ENCODE measurements at regions of chr12 and their contacts with region 1.

Region 1: DNA sequence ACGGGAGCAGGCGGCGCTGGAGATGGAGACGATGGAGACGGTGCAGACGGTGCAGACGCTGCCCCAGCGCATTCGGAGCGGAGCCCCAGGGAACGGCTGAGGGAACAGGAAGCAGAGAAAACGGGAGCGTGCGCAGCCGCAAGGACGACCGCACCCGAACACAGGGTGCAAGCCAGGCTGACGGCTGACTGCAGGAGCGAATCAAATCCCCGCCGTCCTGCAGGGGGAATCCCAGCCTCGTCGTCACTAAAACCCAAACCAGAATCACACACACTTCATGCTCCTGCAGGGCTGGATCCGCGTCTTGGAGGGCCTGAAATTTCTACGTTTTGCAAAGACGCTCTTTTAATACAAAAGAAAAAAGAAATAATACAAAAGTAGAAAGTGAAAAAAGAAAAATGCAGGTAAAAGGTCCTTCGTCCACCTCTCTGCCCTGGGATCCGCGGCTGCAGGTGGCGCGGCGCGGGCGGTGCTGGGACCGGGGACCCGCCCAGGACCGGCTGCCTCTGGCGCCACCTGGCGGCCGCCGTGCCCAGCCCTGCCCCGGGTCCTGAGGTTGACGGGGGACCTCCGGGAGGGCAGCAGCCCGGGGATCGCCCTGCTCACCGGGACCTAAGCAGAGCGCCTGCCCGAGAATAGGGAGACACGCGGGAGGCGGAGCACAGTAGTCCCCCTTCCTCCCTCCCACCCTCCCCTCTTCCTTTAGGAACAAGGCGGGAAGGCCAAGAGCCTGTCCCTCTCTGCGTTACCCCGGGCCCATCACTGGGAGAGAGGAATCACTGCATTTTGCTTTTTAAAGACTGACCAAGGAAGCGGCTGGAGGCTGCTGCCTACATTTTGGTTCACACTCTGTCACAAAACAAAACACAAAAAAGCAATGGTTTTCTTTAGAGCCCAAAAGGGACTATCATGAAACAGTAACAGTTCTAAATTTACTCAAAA is 20.1 kb downstream of the STX2 start:
- DNase-seq: peak; percentile 59 to 91 (median 74)
- ATAC-seq: peak; percentile 94
- H3K4me3 ChIP-seq: peak overlapping the region; percentile 64 to 66
- H3K4me3 Mint-ChIP-seq: peak overlapping the region; percentile 88
- H3K27ac ChIP-seq: peak overlapping the region; percentile 24 to 56
- H3K27ac Mint-ChIP-seq: peak overlapping the region; percentile 41
- H3K4me1 ChIP-seq: peaks cover 7% of the 10 kb centered on the region
- H3K4me1 Mint-ChIP-seq: peaks cover 10% of the 10 kb centered on the region
- H3K27me3 ChIP-seq: no peaks in the 10 kb centered on the region
- H3K27me3 Mint-ChIP-seq: no peaks in the 10 kb centered on the region
- CTCF ChIP-seq: peak; percentile 97

Region 2: GRCh38 chr12:130049666-130050065 is 769.2 kb before region 1 on chr12:
- CTCF ChIA-PET with region 1: no interaction called
- POLR2A ChIA-PET with region 1: no interaction called
- intact Hi-C with region 1: loop called in 1 of 2 experiments (anchors 2 kb)
- DNase-seq: no peak
- ATAC-seq: no peak
- H3K4me3 ChIP-seq: no peak overlapping the region
- H3K4me3 Mint-ChIP-seq: no peak overlapping the region
- H3K27ac ChIP-seq: no peak overlapping the region
- H3K27ac Mint-ChIP-seq: no peak overlapping the region
- H3K4me1 ChIP-seq: peaks cover 4% of the 10 kb centered on the region
- H3K4me1 Mint-ChIP-seq: peaks cover 2% of the 10 kb centered on the region
- H3K27me3 ChIP-seq: peaks cover 0 to 11% of the 10 kb centered on the region in 2 experiments
- H3K27me3 Mint-ChIP-seq: peaks cover 34% of the 10 kb centered on the region
- CTCF ChIP-seq: no peak

Region 3: DNA sequence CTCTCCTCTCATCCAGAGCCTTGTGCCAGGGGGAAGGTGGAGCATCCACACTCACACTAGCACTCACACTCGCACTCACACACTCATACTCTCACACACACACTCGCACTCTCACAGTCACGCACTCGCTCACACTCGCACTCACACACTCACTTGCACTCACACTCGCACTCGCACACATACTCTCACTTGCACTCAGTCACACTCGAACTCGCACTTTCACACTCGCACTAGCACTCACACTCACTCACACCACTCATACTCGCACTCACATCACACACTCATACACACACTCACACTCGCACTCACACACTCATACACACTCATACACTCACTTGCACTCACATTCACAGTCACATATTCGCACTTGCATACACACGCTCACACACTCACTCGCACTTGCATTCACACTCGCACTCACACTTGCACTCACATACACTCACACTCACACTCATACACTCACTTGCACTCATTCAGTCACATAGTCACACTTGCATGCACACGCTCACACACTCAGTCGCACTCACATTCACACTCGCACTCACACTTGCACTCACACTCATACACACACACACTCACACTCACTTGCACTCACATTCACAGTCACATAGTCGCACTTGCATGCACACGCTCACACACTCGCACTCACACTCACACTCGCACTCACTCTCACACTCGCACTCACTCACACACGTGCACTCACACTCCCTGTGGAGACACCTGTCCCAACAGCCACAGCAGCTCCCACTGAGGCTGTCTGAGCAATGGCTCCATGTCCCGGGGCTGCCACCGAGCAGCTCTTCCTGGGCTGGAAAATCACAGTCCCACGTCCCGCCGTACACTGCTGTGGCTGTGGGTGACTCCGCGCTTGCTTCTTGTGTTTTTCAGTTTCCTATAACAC is 90.5 kb before region 1 on chr12:
- CTCF ChIA-PET with region 1: no interaction called
- POLR2A ChIA-PET with region 1: no interaction called
- intact Hi-C with region 1: no loop called
- DNase-seq: no peak
- ATAC-seq: no peak
- H3K4me3 ChIP-seq: no peak overlapping the region
- H3K4me3 Mint-ChIP-seq: no peak overlapping the region
- H3K27ac ChIP-seq: no peak overlapping the region
- H3K27ac Mint-ChIP-seq: no peak overlapping the region
- H3K4me1 ChIP-seq: no peaks in the 10 kb centered on the region
- H3K4me1 Mint-ChIP-seq: no peaks in the 10 kb centered on the region
- H3K27me3 ChIP-seq: no peaks in the 10 kb centered on the region
- H3K27me3 Mint-ChIP-seq: peaks cover 9% of the 10 kb centered on the region
- CTCF ChIP-seq: no peak

Region 4: GRCh38 chr12:130747867-130748740 is 70.8 kb before region 1 on chr12:
- CTCF ChIA-PET with region 1: interaction called, 6 read pairs
- POLR2A ChIA-PET with region 1: no interaction called
- intact Hi-C with region 1: loop called in 1 of 2 experiments (anchors 5 kb)
- DNase-seq: peak; percentile 38 to 79 (median 70)
- ATAC-seq: peak; percentile 73
- H3K4me3 ChIP-seq: no peak overlapping the region
- H3K4me3 Mint-ChIP-seq: peak overlapping the region; percentile 33
- H3K27ac ChIP-seq: no peak overlapping the region
- H3K27ac Mint-ChIP-seq: no peak overlapping the region
- H3K4me1 ChIP-seq: peaks cover 6% of the 10 kb centered on the region
- H3K4me1 Mint-ChIP-seq: peaks cover 6% of the 10 kb centered on the region
- H3K27me3 ChIP-seq: peaks cover 0 to 2% of the 10 kb centered on the region in 2 experiments
- H3K27me3 Mint-ChIP-seq: peaks cover 19% of the 10 kb centered on the region
- CTCF ChIP-seq: peak; percentile 83

Region 5: DNA sequence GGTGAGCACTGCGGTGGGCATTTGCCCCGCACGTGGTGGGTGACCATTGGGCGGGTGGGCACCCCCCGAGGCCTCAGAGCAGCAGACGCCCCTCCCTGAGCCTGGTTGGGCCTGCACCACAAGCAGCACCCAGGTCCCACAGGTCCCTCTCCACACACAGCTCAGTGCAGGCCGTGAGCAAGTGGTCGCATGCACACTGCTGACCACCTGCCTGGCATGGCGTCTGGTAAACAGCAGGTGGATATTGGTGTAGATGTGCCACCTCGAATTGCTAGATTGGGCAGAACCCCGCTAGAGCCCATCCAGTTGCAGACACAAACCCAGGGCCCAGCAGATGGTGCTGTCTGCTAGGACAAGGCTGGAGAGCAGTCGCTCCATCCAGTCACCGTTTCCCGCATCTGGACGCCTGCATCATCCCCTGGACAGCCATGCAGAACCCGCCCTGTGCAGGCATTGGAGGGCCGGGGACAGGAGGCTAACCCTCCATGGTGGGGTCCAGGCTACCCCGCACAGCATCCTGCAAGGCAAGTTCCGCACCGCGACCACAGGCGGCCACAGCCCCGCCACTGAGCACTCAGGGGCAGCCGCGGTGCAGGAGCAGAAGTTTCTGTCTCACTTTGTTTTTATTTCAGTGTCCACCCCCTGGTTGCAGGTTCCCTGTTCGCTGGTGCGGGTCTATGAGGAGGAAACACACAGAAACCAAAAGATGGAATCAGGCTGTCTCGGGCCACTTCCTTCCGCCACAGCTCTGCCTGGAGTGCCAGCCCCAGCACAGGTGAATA is 57.2 kb before region 1 on chr12:
- CTCF ChIA-PET with region 1: interaction called, 14 read pairs
- POLR2A ChIA-PET with region 1: no interaction called
- intact Hi-C with region 1: loop called (anchors 1 kb)
- DNase-seq: peak; percentile 26 to 74 (median 55)
- ATAC-seq: peak; percentile 48
- H3K4me3 ChIP-seq: peak overlapping the region; percentile 24 to 37
- H3K4me3 Mint-ChIP-seq: peak overlapping the region; percentile 59
- H3K27ac ChIP-seq: no peak overlapping the region
- H3K27ac Mint-ChIP-seq: no peak overlapping the region
- H3K4me1 ChIP-seq: peaks cover 23% of the 10 kb centered on the region
- H3K4me1 Mint-ChIP-seq: no peaks in the 10 kb centered on the region
- H3K27me3 ChIP-seq: no peaks in the 10 kb centered on the region
- H3K27me3 Mint-ChIP-seq: peaks cover 2% of the 10 kb centered on the region
- CTCF ChIP-seq: peak; percentile 40

Region 6: GRCh38 chr12:130775953-130776856 is 42.7 kb before region 1 on chr12:
- CTCF ChIA-PET with region 1: no interaction called
- POLR2A ChIA-PET with region 1: no interaction called
- intact Hi-C with region 1: loop called in 1 of 2 experiments (anchors 5 kb)
- DNase-seq: peak in 7 of 9 experiments; percentile 16 to 69 (median 43)
- ATAC-seq: peak; percentile 72
- H3K4me3 ChIP-seq: peak overlapping the region; percentile 41 to 62
- H3K4me3 Mint-ChIP-seq: peak overlapping the region; percentile 83
- H3K27ac ChIP-seq: no peak overlapping the region
- H3K27ac Mint-ChIP-seq: no peak overlapping the region
- H3K4me1 ChIP-seq: peaks cover 9% of the 10 kb centered on the region
- H3K4me1 Mint-ChIP-seq: peaks cover 13% of the 10 kb centered on the region
- H3K27me3 ChIP-seq: no peaks in the 10 kb centered on the region
- H3K27me3 Mint-ChIP-seq: peaks cover 23% of the 10 kb centered on the region
- CTCF ChIP-seq: no peak

Region 7: GRCh38 chr12:130803702-130804101 is 15.2 kb before region 1 on chr12:
- CTCF ChIA-PET with region 1: no interaction called
- POLR2A ChIA-PET with region 1: no interaction called
- intact Hi-C with region 1: no loop called
- DNase-seq: no peak
- ATAC-seq: no peak
- H3K4me3 ChIP-seq: no peak overlapping the region
- H3K4me3 Mint-ChIP-seq: no peak overlapping the region
- H3K27ac ChIP-seq: no peak overlapping the region
- H3K27ac Mint-ChIP-seq: peak overlapping the region; percentile 11
- H3K4me1 ChIP-seq: no peaks in the 10 kb centered on the region
- H3K4me1 Mint-ChIP-seq: no peaks in the 10 kb centered on the region
- H3K27me3 ChIP-seq: no peaks in the 10 kb centered on the region
- H3K27me3 Mint-ChIP-seq: no peaks in the 10 kb centered on the region
- CTCF ChIP-seq: no peak

Region 8: DNA sequence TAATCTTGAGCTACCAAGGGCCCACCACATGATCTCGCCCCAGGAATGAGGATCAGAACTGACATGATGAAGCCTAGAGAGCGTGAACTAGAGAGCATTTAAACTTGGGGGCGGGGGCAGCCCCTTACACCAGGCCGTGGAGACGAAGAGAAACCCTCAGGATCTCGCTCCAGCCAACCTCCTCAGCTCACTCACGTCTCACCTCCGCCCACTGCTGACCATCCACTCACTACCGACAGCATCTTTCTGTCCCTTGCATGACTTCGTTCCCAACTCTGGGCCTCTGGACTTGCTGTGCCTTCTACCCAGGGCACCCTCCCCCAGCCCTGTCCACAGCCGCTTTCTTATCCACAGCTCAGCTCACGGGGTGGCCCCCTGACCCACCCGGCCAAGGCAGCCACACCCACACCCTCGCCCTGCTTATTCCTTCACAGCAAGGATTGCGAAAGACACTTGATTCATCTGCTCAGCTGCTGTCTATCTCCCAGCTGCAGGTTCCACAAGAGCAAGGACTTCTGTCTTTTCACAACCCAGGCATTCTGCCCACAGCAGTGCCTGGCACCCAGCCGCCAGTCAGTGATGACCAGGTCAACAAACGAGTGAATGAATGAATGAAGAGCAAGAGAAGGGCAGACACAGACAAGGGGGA is 13.8 kb after region 1 on chr12:
- CTCF ChIA-PET with region 1: interaction called, 12 read pairs
- POLR2A ChIA-PET with region 1: no interaction called
- intact Hi-C with region 1: no loop called
- DNase-seq: no peak
- ATAC-seq: no peak
- H3K4me3 ChIP-seq: no peak overlapping the region
- H3K4me3 Mint-ChIP-seq: no peak overlapping the region
- H3K27ac ChIP-seq: no peak overlapping the region
- H3K27ac Mint-ChIP-seq: no peak overlapping the region
- H3K4me1 ChIP-seq: no peaks in the 10 kb centered on the region
- H3K4me1 Mint-ChIP-seq: peaks cover 24% of the 10 kb centered on the region
- H3K27me3 ChIP-seq: no peaks in the 10 kb centered on the region
- H3K27me3 Mint-ChIP-seq: no peaks in the 10 kb centered on the region
- CTCF ChIP-seq: no peak

Region 9: DNA sequence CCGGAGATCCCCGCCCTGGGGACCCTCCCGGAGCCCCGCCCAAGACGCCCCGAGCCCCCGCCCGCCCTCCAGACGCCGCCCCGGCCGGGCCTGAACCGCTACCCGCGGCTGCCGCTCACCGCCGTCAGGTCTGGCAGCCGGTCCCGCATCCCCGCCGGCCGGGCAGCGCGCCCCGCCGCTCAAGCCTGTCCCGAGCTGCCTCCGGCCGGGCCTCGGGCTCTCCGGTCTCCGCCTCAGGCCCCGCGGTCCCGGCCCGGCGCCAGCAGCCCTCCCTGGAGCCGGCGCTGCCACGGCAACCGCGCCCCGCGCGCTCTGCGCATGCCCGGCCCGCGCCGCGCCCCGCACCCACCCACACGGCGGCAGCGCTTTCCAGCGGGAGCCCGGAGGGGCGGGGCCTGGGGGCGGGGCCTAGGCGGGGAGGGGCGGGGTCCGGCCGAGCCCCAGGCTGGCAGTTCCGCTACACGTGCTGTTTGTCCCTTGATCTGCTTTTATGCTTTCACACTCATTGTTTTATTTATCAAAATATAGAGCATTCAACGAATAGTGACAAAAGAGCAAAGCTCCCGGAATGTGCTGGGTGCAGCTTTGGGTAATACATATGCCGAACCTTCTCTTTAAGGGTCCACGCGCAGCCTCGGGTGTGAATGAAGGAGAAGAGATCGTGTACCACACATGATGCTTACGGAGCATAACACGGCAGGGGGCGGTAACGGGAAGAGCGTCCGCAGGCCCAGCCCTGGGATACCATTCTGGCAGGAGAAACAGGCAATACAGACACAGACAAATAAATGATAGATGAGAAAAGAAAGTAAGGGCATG is 20.3 kb after region 1 on chr12 and contains the start of gene STX2:
- CTCF ChIA-PET with region 1: interaction called, 5 read pairs
- POLR2A ChIA-PET with region 1: no interaction called
- intact Hi-C with region 1: loop called in 1 of 2 experiments (anchors 2 kb)
- DNase-seq: peak; percentile 82 to 95 (median 88)
- ATAC-seq: peak; percentile 95
- H3K4me3 ChIP-seq: peak within 1 kb of the TSS; percentile 62 to 88
- H3K4me3 Mint-ChIP-seq: peak within 1 kb of the TSS; percentile 83
- H3K27ac ChIP-seq: peak within 1 kb of the TSS; percentile 50 to 63
- H3K27ac Mint-ChIP-seq: peak within 1 kb of the TSS; percentile 88
- H3K4me1 ChIP-seq: peaks cover 9% of the 10 kb centered on the region
- H3K4me1 Mint-ChIP-seq: peaks cover 27% of the 10 kb centered on the region
- H3K27me3 ChIP-seq: no peaks in the 10 kb centered on the region
- H3K27me3 Mint-ChIP-seq: no peaks in the 10 kb centered on the region
- CTCF ChIP-seq: peak; percentile 25
- total RNA-seq, gene STX2: 15.8 to 18.2 TPM

Region 10: DNA sequence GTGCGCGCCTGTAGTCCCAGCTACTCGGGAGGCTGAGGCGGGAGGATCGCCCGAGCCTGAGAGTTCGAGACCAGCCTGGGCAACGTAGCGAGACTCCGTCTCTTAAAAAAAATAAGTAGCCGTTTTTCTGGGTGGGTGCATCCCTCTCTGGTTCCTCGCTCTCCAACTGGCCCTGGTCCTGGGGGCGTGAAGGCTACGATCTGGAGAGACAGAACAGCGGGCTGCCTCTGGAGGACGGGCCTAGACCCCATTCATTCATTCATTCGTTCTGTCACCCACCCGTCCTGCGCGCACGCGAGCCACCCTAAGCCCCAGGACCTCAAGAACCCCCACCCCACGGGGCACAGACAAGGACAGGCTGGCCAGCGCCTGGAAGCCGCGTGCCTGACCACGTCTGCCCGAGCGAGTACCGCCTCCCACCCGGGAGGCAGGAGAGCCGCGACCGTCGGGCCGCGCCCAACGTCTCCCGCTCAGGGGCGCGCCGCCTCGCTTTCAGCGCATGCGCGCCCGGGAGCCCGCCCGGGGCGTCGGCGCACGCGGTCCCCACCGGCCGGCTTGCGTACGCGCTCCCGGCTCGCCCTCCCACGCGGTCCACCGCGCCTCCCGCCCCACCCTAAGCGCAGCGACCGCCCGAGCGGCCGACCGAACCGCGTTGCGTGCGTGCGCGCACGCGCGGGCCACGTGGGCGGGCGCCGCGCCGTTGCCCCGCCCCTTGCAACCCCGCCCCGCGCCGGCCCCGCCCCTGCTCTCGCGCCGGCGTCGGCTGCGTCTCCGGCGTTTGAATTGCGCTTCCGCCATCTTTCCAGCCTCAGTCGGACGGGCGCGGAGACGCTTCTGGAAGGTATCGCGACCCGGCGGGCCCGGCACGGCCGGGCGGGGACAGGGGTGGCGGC is 52.6 kb after region 1 on chr12 and contains the start of gene RAN:
- CTCF ChIA-PET with region 1: no interaction called
- POLR2A ChIA-PET with region 1: no interaction called
- intact Hi-C with region 1: no loop called
- DNase-seq: peak; percentile 83 to 98 (median 89)
- ATAC-seq: peak; percentile 80
- H3K4me3 ChIP-seq: peak within 1 kb of the TSS; percentile 72 to 82
- H3K4me3 Mint-ChIP-seq: peak within 1 kb of the TSS; percentile 94
- H3K27ac ChIP-seq: peak within 1 kb of the TSS; percentile 84 to 85
- H3K27ac Mint-ChIP-seq: peak within 1 kb of the TSS; percentile 95
- H3K4me1 ChIP-seq: peaks cover 54% of the 10 kb centered on the region
- H3K4me1 Mint-ChIP-seq: peaks cover 65% of the 10 kb centered on the region
- H3K27me3 ChIP-seq: no peaks in the 10 kb centered on the region
- H3K27me3 Mint-ChIP-seq: no peaks in the 10 kb centered on the region
- CTCF ChIP-seq: no peak
- total RNA-seq, gene RAN: 342 to 352 TPM